ENCODE measurements at regions of chr1 and their contacts with region 1.

Region 1: DNA sequence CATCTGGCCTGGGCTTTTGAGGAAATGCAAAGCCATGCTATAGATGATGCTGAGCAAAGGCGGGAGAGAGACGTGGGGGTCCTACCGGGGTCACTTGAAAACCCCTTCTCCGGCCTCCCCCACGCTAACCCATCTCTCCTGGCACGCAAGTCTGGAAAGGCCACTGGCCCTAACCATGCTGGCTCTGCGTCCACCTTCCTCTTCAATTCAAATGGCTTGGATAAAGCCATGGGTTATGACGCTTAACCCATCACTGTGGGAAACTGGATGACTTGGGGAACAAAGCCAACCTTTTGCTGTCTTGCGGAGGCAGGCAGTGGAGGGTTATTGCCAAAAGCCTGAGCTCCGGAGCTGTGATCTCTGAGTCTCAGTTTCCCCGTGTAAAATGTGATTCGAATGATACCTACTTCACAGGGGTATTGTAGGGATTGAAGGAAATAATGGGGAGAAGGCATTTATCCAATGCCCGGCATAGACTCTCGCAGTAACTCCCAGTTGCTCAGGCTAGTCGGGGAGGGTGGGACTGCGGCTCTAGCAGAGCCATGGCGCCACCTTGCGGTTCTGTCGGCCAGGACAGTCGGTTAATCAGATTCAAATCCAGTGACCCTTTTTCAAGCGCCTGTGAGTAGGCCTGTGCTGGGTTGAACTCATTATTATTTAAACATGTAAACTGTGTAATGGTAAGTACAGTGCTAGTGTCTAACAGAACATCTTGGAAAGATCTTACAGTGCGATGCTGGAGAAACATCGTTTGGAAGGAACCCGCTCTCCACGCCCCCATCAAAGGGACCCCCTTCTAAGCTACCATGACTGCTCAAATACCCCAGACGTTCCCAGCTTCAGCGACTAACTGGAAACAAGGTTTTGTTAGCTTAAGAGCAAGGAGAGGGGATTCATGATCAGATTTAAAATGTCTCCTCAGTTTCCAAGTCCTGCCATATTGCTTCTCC is 20.3 kb downstream of the NEK2 start:
- DNase-seq: no peak
- H3K4me3 ChIP-seq: no peak overlapping the region
- H3K27me3 ChIP-seq: no peaks in the 10 kb centered on the region
- CTCF ChIP-seq: peak; percentile 96

Region 2: GRCh38 chr1:211323156-211324063 is 331.7 kb before region 1 on chr1:
- CTCF ChIA-PET with region 1: interaction called, 10 read pairs
- POLR2A ChIA-PET with region 1: no interaction called
- DNase-seq: no peak
- H3K4me3 ChIP-seq: no peak overlapping the region
- H3K27me3 ChIP-seq: no peaks in the 10 kb centered on the region
- CTCF ChIP-seq: peak; percentile 88

Region 3: GRCh38 chr1:211469938-211470529 is 185.1 kb before region 1 on chr1:
- CTCF ChIA-PET with region 1: interaction called, 35 read pairs
- POLR2A ChIA-PET with region 1: no interaction called
- DNase-seq: no peak
- H3K4me3 ChIP-seq: no peak overlapping the region
- H3K27me3 ChIP-seq: peaks cover 8% of the 10 kb centered on the region
- CTCF ChIP-seq: peak; percentile 98

Region 4: DNA sequence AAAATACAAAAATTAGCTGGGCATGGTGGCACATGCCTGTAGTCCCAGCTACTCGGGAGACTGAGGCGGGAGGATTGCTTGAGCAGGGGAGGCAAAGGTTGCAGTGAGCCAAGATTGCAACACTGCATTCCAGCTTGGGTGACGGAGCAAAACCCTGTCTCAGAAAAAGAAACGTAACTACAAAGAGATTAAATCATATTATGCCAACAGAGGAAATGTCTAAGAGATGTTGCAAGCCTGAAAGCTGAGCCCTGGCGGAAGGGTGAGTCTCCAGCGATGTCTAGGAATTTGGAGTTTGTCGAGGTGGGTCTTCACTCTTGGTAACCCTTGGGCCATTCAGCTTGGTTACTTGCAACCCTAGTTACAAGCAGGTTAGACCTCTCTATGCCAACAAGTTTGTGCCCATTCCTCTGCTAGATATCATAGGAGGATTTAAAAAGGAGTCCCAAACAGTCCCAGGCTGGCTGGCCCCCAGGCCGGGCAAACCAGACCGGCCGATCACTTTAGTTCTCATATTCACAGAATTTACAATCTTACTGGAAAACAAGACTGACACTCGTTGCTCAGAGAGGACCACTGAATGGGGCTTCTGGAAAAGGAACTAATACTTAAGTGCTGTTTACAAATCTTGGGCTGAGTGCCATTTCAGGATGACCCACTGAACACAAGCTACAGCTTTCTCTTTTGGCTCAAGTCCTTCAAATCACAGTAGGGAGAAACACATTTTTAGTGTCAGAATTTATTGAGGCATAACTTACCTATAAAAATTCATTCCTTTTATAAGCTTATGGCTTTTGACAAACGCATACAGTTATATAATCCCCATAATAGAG is 103.3 kb before region 1 on chr1:
- CTCF ChIA-PET with region 1: interaction called, 15 read pairs
- POLR2A ChIA-PET with region 1: no interaction called
- DNase-seq: no peak
- H3K4me3 ChIP-seq: no peak overlapping the region
- H3K27me3 ChIP-seq: peaks cover 6% of the 10 kb centered on the region
- CTCF ChIP-seq: no peak

Region 5: GRCh38 chr1:211578640-211579433 is 76.3 kb before region 1 on chr1 and contains the start of gene SLC30A1:
- CTCF ChIA-PET with region 1: interaction called, 21 read pairs
- POLR2A ChIA-PET with region 1: no interaction called
- DNase-seq: peak; percentile 84
- H3K4me3 ChIP-seq: peak within 1 kb of the TSS; percentile 78
- H3K27me3 ChIP-seq: no peaks in the 10 kb centered on the region
- CTCF ChIP-seq: no peak
- polyA plus RNA-seq, gene SLC30A1: 5.8 and 9.9 TPM in 2 replicates

Region 6: GRCh38 chr1:211639500-211640300 is 15.4 kb before region 1 on chr1:
- CTCF ChIA-PET with region 1: interaction called, 27 read pairs
- POLR2A ChIA-PET with region 1: no interaction called
- DNase-seq: peak; percentile 69
- H3K4me3 ChIP-seq: no peak overlapping the region
- H3K27me3 ChIP-seq: no peaks in the 10 kb centered on the region
- CTCF ChIP-seq: no peak

Region 7: DNA sequence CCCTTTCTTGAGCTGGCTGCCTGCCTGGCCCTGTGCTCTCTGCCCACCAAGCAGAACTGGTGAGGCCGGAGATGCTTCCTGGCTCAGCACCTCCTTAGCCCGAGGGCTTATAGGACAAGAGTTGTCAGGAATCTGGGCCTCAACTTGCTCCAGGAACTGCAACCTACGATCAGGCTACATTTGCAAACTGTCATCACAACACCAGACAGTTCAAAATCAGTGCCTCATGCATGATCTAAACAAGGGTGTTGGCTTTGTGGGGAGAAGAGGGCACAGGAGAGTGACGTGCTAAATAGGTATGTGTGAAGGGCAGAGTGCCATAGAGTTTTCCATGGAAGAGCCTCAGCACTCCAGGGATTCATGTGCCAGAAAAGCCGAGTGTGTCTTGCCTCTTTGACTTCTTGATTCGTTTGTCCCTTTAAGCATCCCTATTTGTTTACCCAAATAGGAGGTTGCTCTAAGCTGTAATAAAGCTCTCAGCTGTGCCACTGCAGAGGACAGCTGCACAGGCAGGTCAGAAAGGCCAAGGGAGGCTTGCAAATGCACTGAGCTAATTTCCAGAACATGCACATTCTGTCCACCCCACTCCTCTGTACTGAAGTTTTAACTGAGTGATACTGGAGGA is 50.5 kb after region 1 on chr1:
- CTCF ChIA-PET with region 1: no interaction called
- POLR2A ChIA-PET with region 1: no interaction called
- DNase-seq: no peak
- H3K4me3 ChIP-seq: no peak overlapping the region
- H3K27me3 ChIP-seq: peaks cover 4% of the 10 kb centered on the region
- CTCF ChIP-seq: no peak

Region 8: DNA sequence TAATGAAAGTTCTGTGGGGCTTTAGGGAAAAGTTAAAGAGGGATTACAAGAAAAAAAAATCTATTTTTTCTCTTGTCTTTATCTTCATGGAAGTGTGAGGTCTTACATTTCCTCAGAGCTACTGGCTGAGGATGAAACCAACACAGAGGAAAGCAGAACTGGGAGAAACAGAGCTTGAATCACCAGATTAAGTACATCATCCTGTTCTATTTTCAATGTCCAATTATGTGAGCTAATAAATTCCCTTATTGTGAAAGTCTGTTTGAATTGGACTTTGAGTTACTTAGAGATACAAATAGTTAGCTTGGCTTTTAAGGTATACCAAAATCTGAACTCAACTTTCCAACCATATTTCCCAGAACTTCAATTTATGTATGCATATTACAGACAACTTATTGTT is 106.3 kb after region 1 on chr1:
- CTCF ChIA-PET with region 1: no interaction called
- POLR2A ChIA-PET with region 1: no interaction called
- DNase-seq: no peak
- H3K4me3 ChIP-seq: no peak overlapping the region
- H3K27me3 ChIP-seq: no peaks in the 10 kb centered on the region
- CTCF ChIP-seq: no peak

Region 9: DNA sequence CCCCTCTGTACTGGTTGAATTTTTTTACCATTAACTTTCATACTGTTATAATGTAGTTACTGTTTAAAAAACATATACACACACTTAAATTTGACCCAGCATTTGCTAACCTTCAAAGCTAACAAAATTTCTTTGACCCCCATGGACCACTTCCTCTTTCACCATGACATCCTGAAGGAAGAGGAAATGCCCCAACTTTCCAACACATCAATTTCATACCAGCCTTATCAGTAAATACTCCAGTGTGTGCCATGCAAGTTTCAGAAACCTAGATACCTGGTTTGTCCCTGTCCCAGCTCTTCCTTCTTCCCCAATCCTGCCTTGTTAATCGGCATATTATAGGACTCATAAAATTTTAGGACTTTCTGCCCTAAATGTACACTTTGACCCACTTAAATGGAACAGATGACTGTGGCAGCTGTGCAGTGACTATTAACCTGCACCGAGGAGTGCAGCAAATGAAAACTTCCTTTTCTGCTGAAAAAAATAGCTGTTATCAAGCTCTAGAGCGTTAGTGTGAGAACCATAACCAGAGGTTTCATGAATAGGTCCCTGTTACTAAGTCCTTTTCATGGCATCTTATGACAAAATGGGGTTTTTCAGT is 434.5 kb after region 1 on chr1:
- CTCF ChIA-PET with region 1: no interaction called
- POLR2A ChIA-PET with region 1: no interaction called
- DNase-seq: no peak
- H3K4me3 ChIP-seq: no peak overlapping the region
- H3K27me3 ChIP-seq: no peaks in the 10 kb centered on the region
- CTCF ChIP-seq: no peak

Measured in BJ (cell line).